Activated CD4-positive, alpha-beta memory T cell treated with anti-CD3 and anti-CD28 coated beads for 36 hours (primary cell): ENCODE measurements at regions of chr9 and their contacts with region 1.

Region 1: GRCh38 chr9:77456829-77457437 is 191.2 kb downstream of the GNA14 start:
- DNase-seq: peak; percentile 91
- H3K4me3 Mint-ChIP-seq: no peak overlapping the region
- H3K27ac Mint-ChIP-seq: no peak overlapping the region
- H3K4me1 Mint-ChIP-seq: peaks cover 13% of the 10 kb centered on the region
- H3K27me3 Mint-ChIP-seq: no peaks in the 10 kb centered on the region

Region 2: DNA sequence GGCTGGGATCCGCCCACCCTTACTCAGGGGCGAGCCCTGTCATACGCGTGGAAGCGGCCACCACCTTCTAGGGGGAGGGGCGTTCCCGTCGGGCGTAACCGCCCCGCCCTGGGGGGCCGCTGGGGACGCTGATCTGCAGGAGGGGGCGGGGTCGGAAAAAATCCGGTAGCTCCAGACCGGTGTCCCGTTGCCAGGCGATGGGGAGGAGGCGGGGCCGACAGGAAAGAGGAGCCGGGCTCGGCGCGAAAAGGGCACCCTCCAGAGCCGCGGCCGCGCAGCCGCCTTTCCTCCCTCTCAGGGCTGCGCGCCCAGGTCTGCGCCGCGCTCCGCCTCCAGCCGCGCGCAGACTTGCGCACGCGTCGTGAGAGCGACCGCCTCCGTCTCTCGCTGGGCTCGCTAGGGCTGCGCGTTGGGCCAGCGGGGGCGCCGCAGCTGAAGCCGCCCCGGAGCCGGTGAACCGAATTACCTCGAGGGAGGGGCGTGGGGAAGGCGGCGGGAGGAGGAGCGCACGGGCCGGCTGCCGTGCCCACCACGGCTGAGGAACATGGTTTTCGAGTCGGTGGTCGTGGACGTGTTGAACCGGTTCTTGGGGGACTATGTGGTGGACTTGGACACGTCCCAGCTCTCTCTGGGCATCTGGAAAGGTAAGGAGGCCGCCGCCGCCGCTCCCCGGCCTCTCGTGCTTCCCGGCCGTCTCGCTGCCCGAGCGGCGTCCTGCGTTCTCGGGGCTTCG is 279.6 kb before region 1 on chr9 and contains the start of gene VPS13A:
- CTCF ChIA-PET with region 1: interaction called, 6 read pairs
- POLR2A ChIA-PET with region 1: no interaction called
- intact Hi-C with region 1: loop called (anchors 2 kb)
- DNase-seq: peak; percentile 97
- H3K4me3 Mint-ChIP-seq: peak within 1 kb of the TSS; percentile 86
- H3K27ac Mint-ChIP-seq: peak within 1 kb of the TSS; percentile 87
- H3K4me1 Mint-ChIP-seq: peaks cover 22% of the 10 kb centered on the region
- H3K27me3 Mint-ChIP-seq: no peaks in the 10 kb centered on the region
- total RNA-seq, gene VPS13A: 27.3 to 30.4 TPM

Region 3: GRCh38 chr9:77290373-77290772 is 166.6 kb before region 1 on chr9:
- CTCF ChIA-PET with region 1: no interaction called
- POLR2A ChIA-PET with region 1: no interaction called
- intact Hi-C with region 1: no loop called
- DNase-seq: no peak
- H3K4me3 Mint-ChIP-seq: no peak overlapping the region
- H3K27ac Mint-ChIP-seq: no peak overlapping the region
- H3K4me1 Mint-ChIP-seq: no peaks in the 10 kb centered on the region
- H3K27me3 Mint-ChIP-seq: no peaks in the 10 kb centered on the region

Region 4: GRCh38 chr9:77440057-77440456 is 16.9 kb before region 1 on chr9:
- CTCF ChIA-PET with region 1: interaction called, 68 read pairs
- POLR2A ChIA-PET with region 1: no interaction called
- intact Hi-C with region 1: no loop called
- DNase-seq: no peak
- H3K4me3 Mint-ChIP-seq: no peak overlapping the region
- H3K27ac Mint-ChIP-seq: no peak overlapping the region
- H3K4me1 Mint-ChIP-seq: no peaks in the 10 kb centered on the region
- H3K27me3 Mint-ChIP-seq: no peaks in the 10 kb centered on the region

Region 5: GRCh38 chr9:77488439-77489126 is 31.6 kb after region 1 on chr9:
- CTCF ChIA-PET with region 1: interaction called, 132 read pairs
- POLR2A ChIA-PET with region 1: no interaction called
- intact Hi-C with region 1: loop called (anchors 1 kb)
- DNase-seq: no peak
- H3K4me3 Mint-ChIP-seq: no peak overlapping the region
- H3K27ac Mint-ChIP-seq: no peak overlapping the region
- H3K4me1 Mint-ChIP-seq: peaks cover 17% of the 10 kb centered on the region
- H3K27me3 Mint-ChIP-seq: peaks cover 21% of the 10 kb centered on the region

Region 6: DNA sequence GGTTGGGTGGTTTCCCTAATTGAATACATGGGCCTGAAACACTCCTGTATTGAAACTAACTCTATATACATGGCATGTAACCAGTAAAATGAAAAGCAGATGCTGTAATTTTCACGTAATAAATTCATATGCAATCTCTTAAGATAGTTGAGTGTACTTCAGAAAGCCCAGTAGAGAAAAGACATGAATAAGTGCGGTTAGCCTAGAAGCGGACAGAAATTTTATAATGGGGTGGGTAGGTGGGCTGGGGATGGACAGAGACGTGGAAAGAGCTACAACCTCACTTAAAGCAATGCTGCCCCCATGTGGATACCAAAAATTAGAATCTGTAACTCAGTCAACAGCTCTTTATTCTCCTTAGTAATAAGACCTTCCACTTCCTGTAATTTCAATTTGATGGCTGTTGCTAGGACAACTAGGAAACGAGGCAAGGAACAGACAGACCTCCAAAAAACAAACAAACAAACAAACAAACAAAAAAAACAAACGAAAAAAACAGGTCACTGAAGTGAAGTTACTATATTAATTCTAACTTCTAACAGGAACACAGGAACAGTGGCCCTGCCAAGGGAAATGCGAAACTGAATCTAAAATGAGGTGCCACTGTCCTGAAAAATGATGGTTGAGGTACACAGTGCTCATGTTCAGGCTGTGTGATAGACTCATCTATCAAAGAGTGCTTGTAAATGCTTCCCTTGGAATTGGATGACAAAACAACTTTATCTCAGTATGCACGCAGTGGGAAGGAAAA is 294.6 kb after region 1 on chr9:
- CTCF ChIA-PET with region 1: interaction called, 38 read pairs
- POLR2A ChIA-PET with region 1: no interaction called
- intact Hi-C with region 1: loop called (anchors 1 kb)
- DNase-seq: no peak
- H3K4me3 Mint-ChIP-seq: no peak overlapping the region
- H3K27ac Mint-ChIP-seq: no peak overlapping the region
- H3K4me1 Mint-ChIP-seq: peaks cover 21% of the 10 kb centered on the region
- H3K27me3 Mint-ChIP-seq: no peaks in the 10 kb centered on the region

Region 7: DNA sequence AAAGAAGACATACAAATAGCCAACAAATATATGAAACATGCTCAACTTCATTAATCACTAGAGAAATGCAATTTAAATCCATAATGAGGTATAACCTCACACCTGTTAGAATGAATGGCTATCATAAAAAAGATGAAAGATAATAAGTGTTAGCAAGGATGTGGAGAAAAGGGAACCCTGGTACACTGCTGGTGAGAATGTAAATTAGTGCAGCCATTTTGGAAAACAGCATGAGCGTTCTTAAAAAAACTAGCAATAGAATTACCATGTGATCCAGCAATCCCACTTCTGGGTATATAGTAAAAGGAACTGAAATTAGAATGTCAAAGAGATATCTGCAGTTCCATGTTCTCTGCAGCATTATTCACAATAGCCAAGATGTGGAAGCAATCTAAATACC is 714.7 kb after region 1 on chr9:
- CTCF ChIA-PET with region 1: no interaction called
- POLR2A ChIA-PET with region 1: no interaction called
- intact Hi-C with region 1: no loop called
- DNase-seq: no peak
- H3K4me3 Mint-ChIP-seq: no peak overlapping the region
- H3K27ac Mint-ChIP-seq: no peak overlapping the region
- H3K4me1 Mint-ChIP-seq: no peaks in the 10 kb centered on the region
- H3K27me3 Mint-ChIP-seq: no peaks in the 10 kb centered on the region

Region 8: DNA sequence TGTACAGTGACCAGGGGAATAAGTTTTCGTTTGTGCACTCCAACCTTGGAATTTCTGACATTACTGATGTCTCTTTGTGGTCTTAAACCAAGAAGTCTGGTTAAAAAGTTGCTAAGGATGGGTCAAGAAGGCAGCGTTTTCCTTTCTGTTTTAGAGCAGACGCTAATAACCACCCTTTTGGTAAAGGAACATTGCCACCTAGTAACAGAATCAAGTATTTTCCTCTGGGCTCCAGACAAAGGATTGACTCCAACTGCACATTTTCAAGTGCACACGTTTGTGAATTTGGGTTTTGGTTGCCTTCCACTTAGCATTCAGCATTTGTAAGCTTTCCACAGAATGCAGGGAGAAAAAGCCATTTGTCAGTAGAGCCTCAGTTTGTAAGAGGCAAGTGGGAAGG is 756.8 kb after region 1 on chr9:
- CTCF ChIA-PET with region 1: no interaction called
- POLR2A ChIA-PET with region 1: no interaction called
- intact Hi-C with region 1: loop called (anchors 10 kb)
- DNase-seq: no peak
- H3K4me3 Mint-ChIP-seq: no peak overlapping the region
- H3K27ac Mint-ChIP-seq: no peak overlapping the region
- H3K4me1 Mint-ChIP-seq: peaks cover 40% of the 10 kb centered on the region
- H3K27me3 Mint-ChIP-seq: no peaks in the 10 kb centered on the region